ENCODE measurements at regions of chr11 and their contacts with region 1.

Region 1: DNA sequence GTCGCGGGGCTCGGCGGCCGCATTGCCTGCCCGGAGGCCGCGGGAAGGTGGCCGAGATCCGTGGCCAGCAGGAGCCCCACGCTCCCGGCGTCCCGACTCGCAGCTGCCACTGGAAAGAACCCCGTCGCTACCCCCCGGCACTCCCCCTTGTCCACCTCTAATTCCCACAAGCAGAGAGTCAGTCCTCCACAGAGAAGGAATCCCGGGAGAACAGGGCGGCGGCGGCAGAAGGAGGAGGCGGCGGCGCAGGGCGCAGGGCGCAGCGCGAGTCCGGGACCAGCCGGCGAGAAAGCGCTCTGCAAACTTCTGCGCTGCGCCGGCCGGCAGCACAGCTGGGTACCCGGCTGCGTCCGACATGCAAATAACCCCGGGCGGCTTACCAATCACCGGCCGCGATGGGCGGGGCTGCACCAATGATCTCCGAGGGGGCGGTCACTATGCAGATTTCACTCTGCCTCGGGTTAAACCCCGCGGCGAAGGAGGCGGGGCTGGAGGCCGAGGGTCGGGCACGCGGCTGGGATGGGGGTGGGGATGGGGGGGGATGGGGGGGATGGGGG is at the start of gene ABTB2:
- DNase-seq: peak; percentile 94
- ATAC-seq: peak; percentile 87
- H3K4me3 Mint-ChIP-seq: peak within 1 kb of the TSS; percentile 88
- H3K27ac Mint-ChIP-seq: peak within 1 kb of the TSS; percentile 86
- H3K4me1 Mint-ChIP-seq: peaks cover 39% of the 10 kb centered on the region
- H3K27me3 Mint-ChIP-seq: peaks cover 17% of the 10 kb centered on the region
- CTCF ChIP-seq: no peak
- total RNA-seq, gene ABTB2: 68.6 and 73.0 TPM in 2 replicates

Region 2: DNA sequence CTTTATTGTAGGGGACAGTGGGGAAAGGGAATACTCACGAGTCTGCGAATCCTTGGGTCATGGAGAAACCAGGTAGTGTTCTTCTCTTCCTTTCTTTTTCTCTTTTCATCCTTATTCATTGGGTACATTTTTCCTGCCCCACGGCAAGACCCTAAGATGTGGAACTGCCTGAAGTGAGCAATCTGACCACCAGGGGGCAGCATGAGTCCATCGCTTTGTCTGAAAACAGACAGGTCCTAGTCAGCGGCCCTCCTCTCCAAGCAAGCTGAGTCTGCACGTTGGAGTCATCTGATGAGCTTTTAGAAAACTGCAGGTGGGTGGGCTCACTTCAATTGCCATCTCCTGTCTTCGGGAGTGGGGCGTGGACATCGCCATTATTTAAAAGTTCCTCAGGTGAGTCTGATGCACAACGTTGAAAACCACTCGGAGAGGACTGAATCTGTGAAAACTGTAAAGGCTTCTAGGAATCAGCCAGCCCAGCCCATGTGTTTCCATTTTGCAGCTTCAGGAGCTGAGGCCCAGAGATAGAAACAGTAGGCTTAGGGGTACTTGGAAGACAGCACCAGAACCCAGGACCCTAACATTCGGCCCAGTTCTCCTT is 549.5 kb before region 1 on chr11:
- CTCF ChIA-PET with region 1: interaction called, 3 read pairs
- POLR2A ChIA-PET with region 1: no interaction called
- intact Hi-C with region 1: loop called (anchors 1 kb)
- DNase-seq: peak; percentile 76
- ATAC-seq: peak; percentile 91
- H3K4me3 Mint-ChIP-seq: no peak overlapping the region
- H3K27ac Mint-ChIP-seq: no peak overlapping the region
- H3K4me1 Mint-ChIP-seq: no peaks in the 10 kb centered on the region
- H3K27me3 Mint-ChIP-seq: peaks cover 6% of the 10 kb centered on the region
- CTCF ChIP-seq: peak; percentile 95

Region 3: DNA sequence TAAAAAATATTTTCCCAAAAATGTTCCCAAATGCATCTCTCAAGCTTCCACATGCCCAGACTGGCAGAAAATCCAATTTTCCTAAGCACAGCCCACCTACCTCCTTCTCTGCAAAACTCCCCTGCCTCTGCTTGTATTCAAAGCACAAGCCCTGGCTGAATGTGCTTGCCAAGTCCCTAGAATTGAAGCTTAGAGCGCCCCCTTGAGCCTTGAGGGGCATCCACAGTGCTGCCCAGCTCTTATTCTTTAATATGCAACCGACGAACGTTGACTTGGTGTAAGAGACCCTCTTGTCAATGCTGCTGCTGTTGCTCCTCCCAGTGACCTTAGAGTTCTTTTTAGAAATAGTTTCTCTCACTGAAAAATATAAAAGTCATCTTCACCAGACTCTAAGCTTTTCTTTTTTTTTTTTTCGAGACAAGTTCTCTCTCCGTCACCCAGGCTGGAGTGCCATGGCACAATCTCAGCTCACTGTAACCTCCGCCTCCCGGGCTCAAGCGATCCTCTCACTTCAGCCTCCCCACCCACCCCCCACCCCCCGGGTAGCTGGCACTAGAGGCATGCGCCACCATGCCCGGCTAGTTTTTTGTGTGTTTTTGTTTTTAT is 369.7 kb before region 1 on chr11:
- CTCF ChIA-PET with region 1: no interaction called
- POLR2A ChIA-PET with region 1: no interaction called
- intact Hi-C with region 1: loop called (anchors 2 kb)
- DNase-seq: peak; percentile 29
- ATAC-seq: peak; percentile 92
- H3K4me3 Mint-ChIP-seq: no peak overlapping the region
- H3K27ac Mint-ChIP-seq: no peak overlapping the region
- H3K4me1 Mint-ChIP-seq: peaks cover 3% of the 10 kb centered on the region
- H3K27me3 Mint-ChIP-seq: peaks cover 7% of the 10 kb centered on the region
- CTCF ChIP-seq: no peak

Region 4: DNA sequence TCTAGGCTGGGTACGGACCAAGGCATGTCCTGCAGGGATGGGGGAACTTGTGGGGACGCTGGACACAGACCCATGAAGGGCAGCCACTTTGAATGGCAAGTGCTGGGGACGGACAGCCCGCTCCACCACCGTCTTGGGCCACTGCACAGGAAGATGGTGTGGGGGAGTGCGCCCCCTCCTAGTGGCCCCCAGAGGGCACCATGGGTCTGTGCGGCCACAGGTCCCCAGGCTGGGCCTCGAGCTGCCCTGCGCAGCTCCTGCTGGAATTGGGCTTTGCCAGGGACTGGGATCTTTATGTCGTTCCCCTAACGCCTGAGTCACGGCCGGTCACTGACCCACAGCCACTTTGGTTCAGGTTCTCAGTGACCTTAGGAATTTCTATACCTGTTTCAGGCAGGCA is 208.0 kb before region 1 on chr11:
- CTCF ChIA-PET with region 1: interaction called, 4 read pairs
- POLR2A ChIA-PET with region 1: interaction called, 3 read pairs
- intact Hi-C with region 1: loop called (anchors 1 kb)
- DNase-seq: no peak
- ATAC-seq: no peak
- H3K4me3 Mint-ChIP-seq: no peak overlapping the region
- H3K27ac Mint-ChIP-seq: no peak overlapping the region
- H3K4me1 Mint-ChIP-seq: peaks cover 42% of the 10 kb centered on the region
- H3K27me3 Mint-ChIP-seq: no peaks in the 10 kb centered on the region
- CTCF ChIP-seq: no peak

Region 5: DNA sequence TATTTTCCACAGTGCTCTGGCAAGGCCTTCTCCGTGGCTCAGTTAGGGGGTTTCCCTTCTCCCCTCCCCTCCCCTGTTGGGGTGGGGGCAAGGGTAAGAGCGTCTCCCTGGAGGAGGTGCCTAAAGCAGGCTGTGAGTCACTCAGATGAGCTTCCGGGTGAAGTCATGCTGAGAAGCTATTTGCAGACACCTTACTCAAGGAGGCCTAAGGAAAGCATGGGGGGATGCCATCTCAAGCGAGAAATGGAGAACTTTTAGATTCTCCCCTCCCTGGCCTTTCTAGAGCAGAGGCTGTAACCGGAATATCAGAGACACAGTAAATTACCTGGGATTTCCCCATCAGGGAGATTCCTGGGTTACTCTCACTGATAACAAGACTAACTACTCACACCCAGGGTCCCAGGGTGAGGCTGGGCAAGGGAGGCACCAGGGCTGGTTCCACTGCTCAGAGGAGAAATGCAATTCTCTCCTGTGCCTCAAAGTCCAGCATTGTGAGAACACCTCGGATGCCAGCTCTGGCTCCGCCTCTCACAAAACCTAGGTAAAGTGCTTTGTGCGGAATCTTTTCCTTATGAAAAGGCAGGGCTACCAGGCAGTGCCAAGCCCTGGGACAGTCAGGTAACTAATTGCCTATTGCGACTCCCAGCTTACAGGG is 123.6 kb before region 1 on chr11:
- CTCF ChIA-PET with region 1: interaction called, 5 read pairs
- POLR2A ChIA-PET with region 1: interaction called, 80 read pairs
- intact Hi-C with region 1: loop called (anchors 1 kb)
- DNase-seq: peak; percentile 67
- ATAC-seq: peak; percentile 75
- H3K4me3 Mint-ChIP-seq: peak overlapping the region; percentile 73
- H3K27ac Mint-ChIP-seq: peak overlapping the region; percentile 97
- H3K4me1 Mint-ChIP-seq: peaks cover 76% of the 10 kb centered on the region
- H3K27me3 Mint-ChIP-seq: no peaks in the 10 kb centered on the region
- CTCF ChIP-seq: no peak

Region 6: DNA sequence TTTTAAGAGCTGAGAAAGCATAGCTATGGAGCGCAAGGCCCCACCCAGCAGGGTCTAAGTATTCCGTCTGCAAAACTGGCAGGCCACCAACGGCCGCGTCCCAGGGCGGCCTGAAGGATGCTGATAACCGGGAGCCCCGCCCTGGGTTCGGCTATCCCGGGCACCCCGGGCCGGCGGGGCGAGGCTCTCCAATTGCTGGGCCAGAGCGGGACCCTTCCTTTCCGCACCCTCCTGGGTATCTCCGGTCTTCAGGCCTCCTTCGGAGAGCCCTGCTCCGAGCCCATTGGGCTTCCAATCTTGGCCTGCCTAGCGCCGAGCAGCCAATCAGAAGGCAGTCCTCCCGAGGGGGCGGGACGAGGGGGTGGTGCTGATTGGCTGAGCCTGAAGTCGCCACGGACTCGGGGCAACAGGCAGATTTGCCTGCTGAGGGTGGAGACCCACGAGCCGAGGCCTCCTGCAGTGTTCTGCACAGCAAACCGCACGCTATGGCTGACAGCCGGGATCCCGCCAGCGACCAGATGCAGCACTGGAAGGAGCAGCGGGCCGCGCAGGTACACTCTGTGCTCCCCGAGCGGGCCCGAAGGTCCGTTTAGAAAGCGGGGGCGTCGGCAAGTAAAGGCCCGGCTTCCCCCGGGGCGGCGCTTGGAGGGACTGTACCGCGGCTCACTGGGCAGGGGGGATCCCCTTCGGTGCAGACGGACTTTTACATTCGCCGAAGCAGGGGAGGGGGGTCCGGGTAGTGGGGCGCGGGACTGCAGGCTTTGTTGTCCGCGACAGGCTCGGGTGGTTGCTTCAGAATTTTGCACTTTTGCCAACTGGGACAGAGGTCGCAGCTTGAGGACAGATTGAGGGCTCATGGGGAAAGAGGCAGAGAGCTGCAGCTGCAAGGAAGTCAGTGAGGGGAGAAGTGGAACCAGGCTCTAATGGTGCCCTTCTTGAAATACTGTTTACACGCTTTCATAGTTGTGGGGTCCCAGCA is 81.0 kb after region 1 on chr11 and contains the start of gene CAT:
- CTCF ChIA-PET with region 1: no interaction called
- POLR2A ChIA-PET with region 1: interaction called, 8 read pairs
- intact Hi-C with region 1: loop called (anchors 1 kb)
- DNase-seq: peak; percentile 96
- ATAC-seq: peak; percentile 90
- H3K4me3 Mint-ChIP-seq: peak within 1 kb of the TSS; percentile 99
- H3K27ac Mint-ChIP-seq: peak within 1 kb of the TSS; percentile 98
- H3K4me1 Mint-ChIP-seq: peaks cover 43% of the 10 kb centered on the region
- H3K27me3 Mint-ChIP-seq: no peaks in the 10 kb centered on the region
- CTCF ChIP-seq: no peak
- total RNA-seq, gene CAT: 79.8 and 81.2 TPM in 2 replicates